AG04450 (cell line): ENCODE measurements at regions of chr4 and their contacts with region 1.

Region 1: GRCh38 chr4:180190382-180190781 is 2052.8 kb upstream of the TENM3 start:
- DNase-seq: no peak
- H3K4me3 ChIP-seq: no peak overlapping the region
- H3K27ac ChIP-seq: no peak overlapping the region
- H3K27me3 ChIP-seq: no peaks in the 10 kb centered on the region
- CTCF ChIP-seq: no peak

Region 2: DNA sequence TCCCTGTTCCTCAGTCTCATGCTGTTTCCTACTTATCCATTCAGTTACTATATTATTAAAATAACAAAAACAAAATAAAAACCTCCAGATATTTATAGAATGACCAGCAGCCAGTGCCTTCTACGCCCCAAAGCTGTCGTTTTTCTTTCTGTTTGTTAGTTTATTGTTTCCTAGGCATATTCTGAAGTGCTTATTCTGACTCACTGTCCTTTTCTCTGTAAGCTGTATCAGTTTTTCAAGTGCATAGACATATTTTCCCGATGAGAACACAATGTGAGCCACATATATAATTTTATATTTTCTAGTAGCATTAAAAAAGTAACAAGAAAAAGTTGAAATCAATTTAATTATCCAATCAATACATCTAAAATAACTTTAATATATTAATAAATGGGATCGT is 105.8 kb before region 1 on chr4:
- CTCF ChIA-PET with region 1: no interaction called
- POLR2A ChIA-PET with region 1: no interaction called
- DNase-seq: no peak
- H3K4me3 ChIP-seq: no peak overlapping the region
- H3K27ac ChIP-seq: no peak overlapping the region
- H3K27me3 ChIP-seq: no peaks in the 10 kb centered on the region
- CTCF ChIP-seq: no peak

Region 3: GRCh38 chr4:180225977-180226376 is 35.6 kb after region 1 on chr4:
- CTCF ChIA-PET with region 1: no interaction called
- POLR2A ChIA-PET with region 1: no interaction called
- DNase-seq: no peak
- H3K4me3 ChIP-seq: no peak overlapping the region
- H3K27ac ChIP-seq: no peak overlapping the region
- H3K27me3 ChIP-seq: no peaks in the 10 kb centered on the region
- CTCF ChIP-seq: no peak

Region 4: GRCh38 chr4:180336494-180337090 is 146.2 kb after region 1 on chr4:
- CTCF ChIA-PET with region 1: interaction called, 10 read pairs
- POLR2A ChIA-PET with region 1: no interaction called
- DNase-seq: no peak
- H3K4me3 ChIP-seq: no peak overlapping the region
- H3K27ac ChIP-seq: no peak overlapping the region
- H3K27me3 ChIP-seq: no peaks in the 10 kb centered on the region
- CTCF ChIP-seq: no peak